ENCODE measurements at regions of chr17 and their contacts with region 1.

Region 1: GRCh38 chr17:50297407-50297865 is 23.2 kb downstream of the TMEM92 start:
- DNase-seq: peak; percentile 59 to 86 (median 80)
- ATAC-seq: peak; percentile 100
- H3K4me3 ChIP-seq: no peak overlapping the region
- H3K4me3 Mint-ChIP-seq: no peak overlapping the region
- H3K27ac ChIP-seq: no peak overlapping the region
- H3K27ac Mint-ChIP-seq: no peak overlapping the region
- H3K4me1 ChIP-seq: no peaks in the 10 kb centered on the region
- H3K4me1 Mint-ChIP-seq: no peaks in the 10 kb centered on the region
- H3K27me3 ChIP-seq: no peaks in the 10 kb centered on the region
- H3K27me3 Mint-ChIP-seq: peaks cover 3% of the 10 kb centered on the region
- CTCF ChIP-seq: peak; percentile 87

Region 2: DNA sequence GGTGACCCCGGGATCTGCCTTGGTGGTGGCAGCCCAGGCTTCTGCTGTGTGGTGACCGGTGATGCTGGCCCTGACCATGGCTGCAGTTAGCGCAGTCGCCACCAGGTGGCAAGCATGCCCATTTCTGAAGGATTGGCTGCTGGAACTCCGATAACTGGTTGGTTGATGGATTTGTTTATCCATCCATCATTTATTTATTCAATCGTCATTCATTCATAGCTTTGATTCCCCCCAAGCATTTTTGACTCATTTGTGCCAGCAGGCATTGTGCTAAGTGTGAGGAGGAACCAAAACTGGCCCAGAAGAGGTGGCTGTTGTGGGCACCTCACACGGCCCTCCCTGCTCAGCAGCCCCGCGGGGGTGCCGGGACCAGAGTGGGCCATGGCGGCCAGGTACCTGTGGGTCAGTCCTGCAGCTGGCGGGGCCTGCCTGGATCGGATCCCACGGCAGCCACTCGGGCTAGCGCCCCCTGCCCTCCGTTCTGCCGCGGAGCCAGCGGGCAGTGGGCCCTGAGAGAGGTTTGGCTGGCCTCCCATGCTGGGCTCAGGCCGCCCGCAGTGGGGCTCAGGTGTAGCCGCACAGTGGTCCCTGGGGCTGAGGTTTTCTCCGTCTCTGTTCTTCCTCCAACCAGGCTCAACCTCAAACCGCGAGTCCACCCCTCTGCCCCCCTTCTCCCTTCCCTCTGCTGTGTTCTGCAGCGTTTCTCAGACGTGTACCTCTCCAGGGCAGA is 270.4 kb before region 1 on chr17:
- CTCF ChIA-PET with region 1: interaction called, 4 read pairs
- POLR2A ChIA-PET with region 1: no interaction called
- intact Hi-C with region 1: loop called (anchors 1 to 2 kb)
- DNase-seq: peak; percentile 57 to 87 (median 80)
- ATAC-seq: peak; percentile 92
- H3K4me3 ChIP-seq: no peak overlapping the region
- H3K4me3 Mint-ChIP-seq: peak overlapping the region; percentile 37
- H3K27ac ChIP-seq: no peak overlapping the region
- H3K27ac Mint-ChIP-seq: no peak overlapping the region
- H3K4me1 ChIP-seq: peaks cover 8% of the 10 kb centered on the region
- H3K4me1 Mint-ChIP-seq: peaks cover 9% of the 10 kb centered on the region
- H3K27me3 ChIP-seq: peaks cover 0 to 5% of the 10 kb centered on the region in 2 experiments
- H3K27me3 Mint-ChIP-seq: peaks cover 29% of the 10 kb centered on the region
- CTCF ChIP-seq: peak; percentile 96

Region 3: GRCh38 chr17:50139950-50140871 is 157.2 kb before region 1 on chr17:
- CTCF ChIA-PET with region 1: interaction called, 4 read pairs
- POLR2A ChIA-PET with region 1: no interaction called
- intact Hi-C with region 1: loop called in 1 of 2 experiments (anchors 1 kb)
- DNase-seq: peak; percentile 61 to 89 (median 83)
- ATAC-seq: peak; percentile 92
- H3K4me3 ChIP-seq: peak overlapping the region; percentile 7 to 24
- H3K4me3 Mint-ChIP-seq: peak overlapping the region; percentile 59
- H3K27ac ChIP-seq: peak overlapping the region in 1 of 2 experiments; percentile 47
- H3K27ac Mint-ChIP-seq: peak overlapping the region; percentile 70
- H3K4me1 ChIP-seq: peaks cover 52% of the 10 kb centered on the region
- H3K4me1 Mint-ChIP-seq: peaks cover 54% of the 10 kb centered on the region
- H3K27me3 ChIP-seq: no peaks in the 10 kb centered on the region
- H3K27me3 Mint-ChIP-seq: no peaks in the 10 kb centered on the region
- CTCF ChIP-seq: peak; percentile 92

Region 4: DNA sequence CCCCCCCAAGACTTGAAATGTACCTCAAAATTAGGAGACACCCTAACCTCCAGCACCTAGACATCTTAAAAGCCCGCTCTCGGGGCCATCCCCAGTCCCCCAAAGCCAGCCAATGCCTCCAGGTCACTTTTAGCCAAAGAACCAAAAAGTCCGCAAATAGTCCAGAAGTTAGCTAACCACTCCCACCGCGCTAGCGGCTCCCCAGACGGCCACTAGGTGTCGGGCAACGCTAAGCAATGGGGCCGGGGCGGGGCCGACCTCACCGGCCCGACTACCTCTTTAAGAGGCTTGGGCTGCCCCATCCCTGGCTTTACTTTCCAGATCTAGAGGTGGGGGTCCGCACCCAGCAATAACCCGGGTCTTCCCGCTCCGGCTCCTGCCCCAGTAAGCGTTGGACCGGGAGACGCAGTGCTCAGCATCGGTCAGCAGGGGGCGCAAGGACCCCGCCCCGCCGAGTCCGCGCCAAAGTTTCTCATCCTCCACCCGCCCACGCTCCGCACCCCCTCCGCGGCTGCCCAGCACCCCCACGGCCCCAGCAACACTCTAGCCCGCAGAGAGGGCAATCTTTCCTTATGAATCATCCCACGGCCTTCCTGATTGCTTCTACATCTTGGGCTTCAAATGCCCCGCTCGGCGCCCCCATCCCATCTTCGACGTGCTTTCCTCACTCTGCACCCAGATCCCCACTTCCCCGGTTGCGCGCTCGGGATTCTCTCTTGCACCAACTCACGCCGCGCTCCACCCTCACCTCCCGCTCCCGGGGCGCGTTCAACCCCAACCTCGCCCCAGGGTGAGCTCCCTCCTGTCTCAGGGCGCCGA is 96.8 kb before region 1 on chr17:
- CTCF ChIA-PET with region 1: interaction called, 140 read pairs
- POLR2A ChIA-PET with region 1: no interaction called
- intact Hi-C with region 1: loop called in 1 of 2 experiments (anchors 1 kb)
- DNase-seq: peak; percentile 66 to 87 (median 80)
- ATAC-seq: peak; percentile 49
- H3K4me3 ChIP-seq: peak overlapping the region; percentile 47 to 49
- H3K4me3 Mint-ChIP-seq: peak overlapping the region; percentile 78
- H3K27ac ChIP-seq: no peak overlapping the region
- H3K27ac Mint-ChIP-seq: peak overlapping the region; percentile 11
- H3K4me1 ChIP-seq: peaks cover 21% of the 10 kb centered on the region
- H3K4me1 Mint-ChIP-seq: peaks cover 25% of the 10 kb centered on the region
- H3K27me3 ChIP-seq: peaks cover 12 to 20% of the 10 kb centered on the region in 2 experiments
- H3K27me3 Mint-ChIP-seq: peaks cover 42% of the 10 kb centered on the region
- CTCF ChIP-seq: peak; percentile 100

Region 5: DNA sequence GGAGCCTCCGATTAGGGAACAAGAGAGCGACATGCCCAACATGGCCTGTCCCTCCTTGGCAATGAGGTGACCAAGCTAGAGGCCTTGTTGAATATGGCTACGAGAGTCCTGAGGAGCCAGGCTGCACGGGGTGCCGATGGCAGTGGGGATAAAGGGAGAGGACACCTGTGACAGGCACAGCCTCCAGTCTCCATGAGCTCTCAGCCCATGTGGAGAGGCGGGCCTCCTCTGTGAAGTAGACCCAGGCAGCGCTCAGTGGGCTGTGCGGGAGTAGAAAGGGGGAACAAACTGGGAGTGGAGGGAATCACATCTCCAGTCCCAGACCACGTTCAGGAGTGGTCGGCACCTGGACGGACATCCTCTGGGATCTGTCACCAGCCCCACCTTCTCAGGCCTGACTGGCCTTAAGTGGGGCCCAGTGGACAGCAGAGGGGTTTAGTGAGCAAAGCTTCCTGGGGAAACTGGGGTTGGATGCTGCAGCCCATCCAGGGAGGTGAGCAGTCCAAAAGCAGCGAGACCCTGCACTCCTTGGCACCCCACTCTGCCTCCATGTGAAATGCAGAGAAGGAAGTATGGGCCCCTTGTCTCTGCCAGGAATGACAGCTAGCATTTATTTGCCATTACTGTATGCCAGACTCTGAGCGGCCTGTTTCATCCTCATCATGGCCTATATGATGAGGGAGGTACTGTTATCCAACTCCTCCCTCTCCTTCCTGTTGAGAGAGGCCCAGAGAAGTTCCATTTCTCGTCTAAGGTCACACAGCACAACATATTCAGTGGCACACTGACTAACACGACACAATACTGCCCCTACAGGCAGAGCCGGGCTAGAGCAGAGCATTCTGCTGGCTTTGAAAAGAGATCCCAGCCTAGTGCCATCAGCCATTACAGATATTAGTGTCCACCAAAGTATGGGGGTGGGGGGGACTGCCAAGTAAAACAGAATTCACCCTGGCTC is 27.7 kb before region 1 on chr17:
- CTCF ChIA-PET with region 1: interaction called, 17 read pairs
- POLR2A ChIA-PET with region 1: no interaction called
- intact Hi-C with region 1: loop called (anchors 1 to 2 kb)
- DNase-seq: peak; percentile 17 to 67 (median 53)
- ATAC-seq: peak; percentile 83
- H3K4me3 ChIP-seq: no peak overlapping the region
- H3K4me3 Mint-ChIP-seq: no peak overlapping the region
- H3K27ac ChIP-seq: no peak overlapping the region
- H3K27ac Mint-ChIP-seq: no peak overlapping the region
- H3K4me1 ChIP-seq: peaks cover 6% of the 10 kb centered on the region
- H3K4me1 Mint-ChIP-seq: peaks cover 5% of the 10 kb centered on the region
- H3K27me3 ChIP-seq: peaks cover 3 to 18% of the 10 kb centered on the region in 2 experiments
- H3K27me3 Mint-ChIP-seq: peaks cover 19% of the 10 kb centered on the region
- CTCF ChIP-seq: peak; percentile 73

Region 6: GRCh38 chr17:50406578-50406977 is 109.1 kb after region 1 on chr17:
- CTCF ChIA-PET with region 1: no interaction called
- POLR2A ChIA-PET with region 1: no interaction called
- intact Hi-C with region 1: no loop called
- DNase-seq: no peak
- ATAC-seq: no peak
- H3K4me3 ChIP-seq: no peak overlapping the region
- H3K4me3 Mint-ChIP-seq: no peak overlapping the region
- H3K27ac ChIP-seq: no peak overlapping the region
- H3K27ac Mint-ChIP-seq: no peak overlapping the region
- H3K4me1 ChIP-seq: no peaks in the 10 kb centered on the region
- H3K4me1 Mint-ChIP-seq: no peaks in the 10 kb centered on the region
- H3K27me3 ChIP-seq: no peaks in the 10 kb centered on the region
- H3K27me3 Mint-ChIP-seq: peaks cover 22% of the 10 kb centered on the region
- CTCF ChIP-seq: no peak

Measured in CD8-positive, alpha-beta T cell (primary cell).